ENCODE measurements at regions of chr7 and their contacts with region 1.

Region 1: DNA sequence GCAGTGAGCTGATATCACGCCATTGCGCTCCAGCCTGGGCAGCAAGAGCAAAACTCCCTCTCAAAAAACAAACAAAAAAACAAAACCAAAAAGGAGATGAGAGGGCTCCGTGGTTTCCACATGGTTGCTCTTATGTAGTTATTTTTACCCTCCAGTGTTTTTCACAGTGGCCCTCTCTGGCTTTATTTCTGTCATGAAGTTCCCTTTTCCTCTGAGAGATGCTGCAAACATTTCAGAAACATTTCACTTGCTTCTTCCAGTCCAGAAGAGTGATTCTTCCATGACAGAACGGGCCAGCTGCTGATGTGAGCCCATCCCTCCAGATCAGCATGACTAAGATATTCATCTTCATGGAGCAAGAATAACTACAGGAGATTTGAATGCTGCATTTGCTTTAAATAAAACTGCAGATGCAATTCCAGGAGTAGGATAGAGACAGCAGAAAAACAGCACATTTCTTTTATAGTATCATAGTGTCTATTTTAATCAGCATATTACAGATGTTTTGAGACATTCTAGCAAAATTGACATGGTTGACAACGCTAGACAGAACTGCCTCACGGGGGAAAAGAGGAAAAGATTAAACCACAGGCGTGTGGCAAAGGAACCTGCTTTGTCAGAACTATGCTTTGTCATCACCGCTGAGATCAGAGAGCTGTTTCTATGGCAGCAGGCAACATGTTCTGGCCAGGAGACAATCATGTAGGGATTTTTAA is 40.3 kb downstream of the NRCAM start:
- DNase-seq: peak; percentile 56
- ATAC-seq: peak; percentile 89
- H3K4me3 Mint-ChIP-seq: no peak overlapping the region
- H3K27ac Mint-ChIP-seq: no peak overlapping the region
- H3K4me1 Mint-ChIP-seq: peaks cover 29% of the 10 kb centered on the region
- H3K27me3 Mint-ChIP-seq: peaks cover 37% of the 10 kb centered on the region

Region 2: GRCh38 chr7:108284349-108285002 is 131.5 kb before region 1 on chr7:
- CTCF ChIA-PET with region 1: no interaction called
- POLR2A ChIA-PET with region 1: no interaction called
- intact Hi-C with region 1: no loop called
- DNase-seq: peak; percentile 51
- ATAC-seq: peak; percentile 93
- H3K4me3 Mint-ChIP-seq: peak overlapping the region; percentile 23
- H3K27ac Mint-ChIP-seq: peak overlapping the region; percentile 49
- H3K4me1 Mint-ChIP-seq: peaks cover 12% of the 10 kb centered on the region
- H3K27me3 Mint-ChIP-seq: peaks cover 15% of the 10 kb centered on the region

Region 3: DNA sequence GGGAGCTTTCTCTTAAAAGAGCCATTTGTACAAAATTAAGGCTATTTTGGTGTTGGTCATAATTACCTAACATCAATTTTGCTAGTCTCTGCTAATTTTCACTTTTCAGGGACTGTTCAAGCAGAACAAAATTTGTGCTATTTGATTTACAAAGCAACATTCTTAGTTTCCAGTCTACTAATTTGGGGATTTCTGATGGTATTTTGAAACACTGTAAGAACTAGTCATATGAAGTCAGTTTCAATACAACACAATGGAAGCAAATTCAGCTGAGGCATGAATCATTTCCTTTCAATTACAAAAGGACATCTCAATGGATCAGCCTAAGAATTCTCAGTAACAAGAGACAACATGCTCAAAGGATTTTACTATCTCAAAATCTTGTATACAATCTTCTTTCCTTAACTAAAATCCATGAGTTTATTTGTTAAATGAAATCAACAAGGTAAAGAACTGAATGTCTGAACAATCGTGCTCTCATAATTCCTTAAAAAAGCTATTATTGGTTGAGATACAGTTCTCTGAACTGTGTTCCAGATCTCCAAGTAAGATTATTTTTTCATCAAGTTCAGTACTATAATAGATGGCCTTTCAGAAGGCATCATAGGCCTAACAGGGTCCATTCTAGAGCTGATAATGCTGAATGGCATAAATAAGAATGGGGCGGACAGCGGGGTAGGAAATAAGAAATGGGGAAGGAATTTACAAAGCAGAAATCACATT is 104.4 kb before region 1 on chr7:
- CTCF ChIA-PET with region 1: no interaction called
- POLR2A ChIA-PET with region 1: no interaction called
- intact Hi-C with region 1: loop called in 1 of 2 experiments (anchors 5 kb)
- DNase-seq: no peak
- ATAC-seq: peak; percentile 88
- H3K4me3 Mint-ChIP-seq: no peak overlapping the region
- H3K27ac Mint-ChIP-seq: peak overlapping the region; percentile 61
- H3K4me1 Mint-ChIP-seq: peaks cover 22% of the 10 kb centered on the region
- H3K27me3 Mint-ChIP-seq: peaks cover 4% of the 10 kb centered on the region

Region 4: GRCh38 chr7:108368466-108368865 is 47.5 kb before region 1 on chr7:
- CTCF ChIA-PET with region 1: no interaction called
- POLR2A ChIA-PET with region 1: no interaction called
- intact Hi-C with region 1: loop called in 1 of 2 experiments (anchors 5 kb)
- DNase-seq: no peak
- ATAC-seq: no peak
- H3K4me3 Mint-ChIP-seq: no peak overlapping the region
- H3K27ac Mint-ChIP-seq: no peak overlapping the region
- H3K4me1 Mint-ChIP-seq: no peaks in the 10 kb centered on the region
- H3K27me3 Mint-ChIP-seq: no peaks in the 10 kb centered on the region

Region 5: GRCh38 chr7:108395426-108395825 is 20.6 kb before region 1 on chr7:
- CTCF ChIA-PET with region 1: no interaction called
- POLR2A ChIA-PET with region 1: no interaction called
- intact Hi-C with region 1: no loop called
- DNase-seq: no peak
- ATAC-seq: no peak
- H3K4me3 Mint-ChIP-seq: no peak overlapping the region
- H3K27ac Mint-ChIP-seq: no peak overlapping the region
- H3K4me1 Mint-ChIP-seq: no peaks in the 10 kb centered on the region
- H3K27me3 Mint-ChIP-seq: peaks cover 10% of the 10 kb centered on the region

Region 6: GRCh38 chr7:108459931-108460551 is 44.1 kb after region 1 on chr7:
- CTCF ChIA-PET with region 1: no interaction called
- POLR2A ChIA-PET with region 1: no interaction called
- intact Hi-C with region 1: loop called in 1 of 2 experiments (anchors 5 kb)
- DNase-seq: peak; percentile 57
- ATAC-seq: peak; percentile 63
- H3K4me3 Mint-ChIP-seq: no peak overlapping the region
- H3K27ac Mint-ChIP-seq: no peak overlapping the region
- H3K4me1 Mint-ChIP-seq: peaks cover 40% of the 10 kb centered on the region
- H3K27me3 Mint-ChIP-seq: peaks cover 28% of the 10 kb centered on the region